Gastrocnemius medialis (tissue), 4 donors: ENCODE measurements at regions of chr17 and their contacts with region 1.

Region 1: GRCh38 chr17:42677008-42677857 is 439 bp upstream of the PLEKHH3 start:
- DNase-seq: peak; percentile 100
- ATAC-seq: peak; percentile 60 to 69
- H3K4me3 ChIP-seq: peak overlapping the region; percentile 76 to 99 (median 97)
- H3K27ac ChIP-seq: peak overlapping the region; percentile 93 to 100 (median 98)
- H3K4me1 ChIP-seq: peaks cover 59 to 68% of the 10 kb centered on the region in 2 donors
- H3K27me3 ChIP-seq: no peaks in the 10 kb centered on the region
- CTCF ChIP-seq: no peak
- POLR2A ChIP-seq: no peak

Region 2: GRCh38 chr17:42586514-42587230 is 90.6 kb before region 1 on chr17:
- in situ Hi-C with region 1: loop called in 3 of 4 experiments (anchors 10 to 25 kb)
- intact Hi-C with region 1: no loop called
- DNase-seq: no peak
- ATAC-seq: peak in 1 of 2 donors; percentile 19
- H3K4me3 ChIP-seq: no peak overlapping the region
- H3K27ac ChIP-seq: peak overlapping the region in 3 of 4 donors; percentile 13 to 61 (median 59)
- H3K4me1 ChIP-seq: peaks cover 14 to 29% of the 10 kb centered on the region in 2 donors
- H3K27me3 ChIP-seq: no peaks in the 10 kb centered on the region
- CTCF ChIP-seq: no peak
- POLR2A ChIP-seq: no peak

Region 3: GRCh38 chr17:42609182-42609813 is 67.9 kb before region 1 on chr17 and contains the starts of genes RETREG3 and TUBG1:
- in situ Hi-C with region 1: loop called in 1 of 4 experiments (anchors 10 kb)
- intact Hi-C with region 1: loop called (anchors 1 kb)
- DNase-seq: peak; percentile 97 to 99
- ATAC-seq: peak; percentile 95
- H3K4me3 ChIP-seq: peak within 1 kb of the TSS; percentile 92 to 100 (median 94)
- H3K27ac ChIP-seq: peak within 1 kb of the TSS; percentile 93 to 99 (median 96)
- H3K4me1 ChIP-seq: peaks cover 47 to 48% of the 10 kb centered on the region in 2 donors
- H3K27me3 ChIP-seq: no peaks in the 10 kb centered on the region
- CTCF ChIP-seq: peak in 4 of 5 experiments; percentile 24 to 51 (median 43)
- POLR2A ChIP-seq: peak; percentile 86 to 88
- total RNA-seq, gene RETREG3: 50.7 to 65.5 (median 60.5) TPM
- total RNA-seq, gene TUBG1: 54.7 to 125 (median 91.7) TPM

Region 4: DNA sequence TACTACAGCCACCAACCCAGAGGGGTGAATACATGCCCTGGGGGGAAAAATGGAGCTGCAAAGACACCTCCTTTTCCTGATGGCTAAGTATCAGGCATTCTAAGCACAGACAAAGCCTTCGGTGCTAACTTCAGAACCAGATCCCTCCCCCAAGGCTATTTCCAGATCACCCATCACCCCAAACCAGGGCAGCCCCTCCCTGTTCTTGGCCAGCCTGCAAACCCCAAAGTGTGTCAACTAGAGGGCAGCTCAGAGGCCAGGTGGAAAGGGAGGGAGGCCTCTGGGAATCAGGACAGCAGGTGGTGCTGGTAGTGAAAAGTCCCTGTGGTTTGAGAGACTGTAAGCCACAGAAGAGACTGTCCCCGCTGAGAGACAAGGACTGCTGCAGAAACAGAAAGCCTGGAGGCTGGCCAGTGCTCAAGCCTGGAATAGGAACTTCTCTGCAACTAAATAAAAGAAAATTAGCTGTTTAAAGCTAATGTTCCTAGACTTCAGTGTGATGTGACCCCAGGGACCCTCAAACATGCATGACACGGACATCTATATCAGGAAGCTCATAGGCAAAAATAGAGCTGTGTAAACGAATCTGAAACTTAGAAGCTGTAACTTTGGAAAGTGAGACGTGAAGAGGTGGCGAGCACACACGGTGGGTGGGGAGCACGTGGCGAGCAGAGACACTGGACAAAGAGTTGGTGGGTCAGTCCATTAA is 58.6 kb before region 1 on chr17:
- in situ Hi-C with region 1: loop called in 1 of 4 experiments (anchors 10 kb)
- intact Hi-C with region 1: loop called (anchors 2 kb)
- DNase-seq: peak; percentile 92 to 97
- ATAC-seq: peak; percentile 97
- H3K4me3 ChIP-seq: peak overlapping the region in 3 of 4 donors; percentile 2 to 30 (median 29)
- H3K27ac ChIP-seq: peak overlapping the region; percentile 86 to 97 (median 91)
- H3K4me1 ChIP-seq: peaks cover 26 to 31% of the 10 kb centered on the region in 2 donors
- H3K27me3 ChIP-seq: no peaks in the 10 kb centered on the region
- CTCF ChIP-seq: peak; percentile 18 to 40 (median 24)
- POLR2A ChIP-seq: peak in 1 of 2 donors; percentile 9

Region 5: DNA sequence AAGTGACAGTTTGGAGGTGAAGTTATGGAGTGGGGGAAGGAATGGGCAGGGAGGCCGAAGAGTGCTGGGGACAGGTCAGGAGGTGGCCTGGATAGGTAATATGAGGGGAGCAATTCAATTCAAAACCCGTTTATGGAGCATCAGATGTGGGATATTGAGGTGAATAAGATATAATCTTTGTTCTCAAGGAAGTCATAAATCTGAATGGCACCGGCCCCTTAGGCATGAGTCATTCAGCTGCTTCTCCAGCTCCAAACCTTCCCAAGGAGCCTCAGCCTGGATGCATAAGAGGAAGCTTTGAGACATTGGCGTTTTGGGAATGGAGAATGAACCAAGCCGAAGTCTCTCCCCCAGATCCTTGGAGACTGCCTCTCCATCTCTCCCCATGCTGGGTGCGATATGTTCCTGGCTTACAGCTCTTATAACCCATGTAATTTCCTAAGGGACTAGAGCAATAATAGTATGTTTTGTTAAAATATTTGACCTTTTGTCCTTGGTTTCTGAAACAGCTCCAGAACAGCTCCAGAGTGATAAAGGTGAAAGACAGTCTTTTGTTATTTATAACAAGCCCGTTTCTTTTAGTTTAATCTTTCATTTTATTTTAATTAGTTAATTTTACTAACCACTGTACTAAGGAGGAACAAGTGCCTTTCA is 16.4 kb before region 1 on chr17:
- in situ Hi-C with region 1: no loop called
- intact Hi-C with region 1: loop called (anchors 2 kb)
- DNase-seq: no peak
- ATAC-seq: no peak
- H3K4me3 ChIP-seq: no peak overlapping the region
- H3K27ac ChIP-seq: peak overlapping the region in 1 of 4 donors; percentile 53
- H3K4me1 ChIP-seq: peaks cover 11 to 12% of the 10 kb centered on the region in 2 donors
- H3K27me3 ChIP-seq: no peaks in the 10 kb centered on the region
- CTCF ChIP-seq: no peak
- POLR2A ChIP-seq: no peak

Region 6: DNA sequence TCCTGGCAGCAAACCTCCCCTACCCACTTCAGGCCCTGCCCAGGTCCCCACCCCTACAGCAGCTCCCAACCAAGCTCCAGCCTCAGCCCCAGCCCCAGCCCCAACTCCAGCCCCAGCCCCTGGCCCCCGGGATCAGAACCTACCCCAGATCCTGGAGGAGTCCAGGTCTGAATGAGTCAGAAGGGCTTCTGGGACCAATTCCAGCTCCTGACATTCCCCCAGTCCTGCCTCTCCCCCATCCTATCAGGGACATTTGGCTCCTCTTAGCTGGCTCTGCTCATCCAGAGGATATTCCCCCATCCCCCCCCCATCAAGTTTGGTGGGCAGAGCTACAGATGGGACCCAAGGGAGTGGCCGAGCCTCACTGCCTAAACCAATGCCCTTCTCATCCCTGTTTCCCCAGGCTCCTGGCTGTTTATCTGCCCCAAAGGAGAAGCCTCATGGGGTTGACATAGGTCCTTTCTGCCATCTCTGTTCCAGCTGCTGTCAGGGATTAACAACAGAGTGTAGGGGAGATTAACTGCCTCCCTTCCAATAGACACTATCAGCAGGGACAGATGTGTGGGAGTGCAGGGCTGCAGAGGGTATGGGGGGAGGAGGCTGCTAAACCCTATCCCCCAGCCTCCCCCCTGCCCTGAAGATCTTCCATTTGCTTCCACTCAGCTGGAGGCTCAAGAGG is 21.6 kb after region 1 on chr17:
- in situ Hi-C with region 1: no loop called
- intact Hi-C with region 1: no loop called
- DNase-seq: no peak
- ATAC-seq: no peak
- H3K4me3 ChIP-seq: no peak overlapping the region
- H3K27ac ChIP-seq: no peak overlapping the region
- H3K4me1 ChIP-seq: no peaks in the 10 kb centered on the region
- H3K27me3 ChIP-seq: no peaks in the 10 kb centered on the region
- CTCF ChIP-seq: no peak
- POLR2A ChIP-seq: no peak

Region 7: DNA sequence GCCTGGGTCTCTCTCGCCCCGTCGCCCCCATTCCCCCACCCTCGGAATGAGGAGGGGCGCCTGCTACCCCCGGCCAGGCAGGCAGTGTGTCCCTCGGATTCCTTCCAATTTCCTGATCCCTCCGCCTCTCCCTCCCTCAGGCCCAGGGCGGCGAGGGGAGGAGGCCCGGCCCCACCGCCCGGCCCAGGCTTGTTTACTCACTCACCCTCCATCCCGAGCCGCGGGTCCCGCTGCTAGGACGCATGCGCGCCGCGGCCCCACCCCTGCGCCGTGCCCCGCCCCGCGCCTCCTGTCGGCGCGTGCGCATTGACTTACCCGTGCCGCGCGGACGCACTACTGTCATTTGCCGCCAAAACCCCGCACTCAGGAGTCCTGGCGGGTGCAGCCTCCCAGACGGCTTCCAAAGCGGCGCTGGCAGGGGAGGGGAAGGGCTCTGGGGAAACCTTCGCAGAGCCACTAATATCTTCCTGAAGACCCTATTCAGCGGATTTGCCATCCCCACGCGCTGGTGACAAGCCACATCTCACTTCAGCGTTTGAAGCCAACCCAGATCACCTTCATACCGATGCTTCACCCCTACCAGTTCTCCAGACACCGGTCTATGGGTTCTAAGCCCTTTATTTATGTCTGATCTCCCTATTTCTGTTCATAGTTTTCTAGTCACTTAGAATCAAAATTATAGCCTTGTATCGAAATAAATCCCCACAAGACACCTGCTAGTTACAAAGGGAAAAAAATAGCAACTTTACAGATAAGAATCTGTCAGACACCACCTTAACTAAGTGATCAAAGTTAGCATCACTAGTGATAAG is 67.8 kb after region 1 on chr17 and contains the start of gene EZH1:
- in situ Hi-C with region 1: no loop called
- intact Hi-C with region 1: no loop called
- DNase-seq: peak; percentile 74 to 87
- ATAC-seq: peak; percentile 86
- H3K4me3 ChIP-seq: peak within 1 kb of the TSS; percentile 86 to 94 (median 94)
- H3K27ac ChIP-seq: peak within 1 kb of the TSS; percentile 98 to 100 (median 99)
- H3K4me1 ChIP-seq: peaks cover 26 to 29% of the 10 kb centered on the region in 2 donors
- H3K27me3 ChIP-seq: no peaks in the 10 kb centered on the region
- CTCF ChIP-seq: peak in 4 of 5 experiments; percentile 19 to 36 (median 28)
- POLR2A ChIP-seq: peak; percentile 79 to 91
- total RNA-seq, gene EZH1: 32.6 to 55.2 (median 47.5) TPM